Mammary epithelial cell (primary cell): ENCODE measurements at regions of chr5 and their contacts with region 1.

Region 1: GRCh38 chr5:76165711-76166374 is 82.7 kb downstream of the SV2C start:
- DNase-seq: no peak
- H3K4me3 ChIP-seq: no peak overlapping the region
- H3K27ac ChIP-seq: no peak overlapping the region
- H3K4me1 ChIP-seq: no peaks in the 10 kb centered on the region
- H3K27me3 ChIP-seq: no peaks in the 10 kb centered on the region
- CTCF ChIP-seq: no peak

Region 2: DNA sequence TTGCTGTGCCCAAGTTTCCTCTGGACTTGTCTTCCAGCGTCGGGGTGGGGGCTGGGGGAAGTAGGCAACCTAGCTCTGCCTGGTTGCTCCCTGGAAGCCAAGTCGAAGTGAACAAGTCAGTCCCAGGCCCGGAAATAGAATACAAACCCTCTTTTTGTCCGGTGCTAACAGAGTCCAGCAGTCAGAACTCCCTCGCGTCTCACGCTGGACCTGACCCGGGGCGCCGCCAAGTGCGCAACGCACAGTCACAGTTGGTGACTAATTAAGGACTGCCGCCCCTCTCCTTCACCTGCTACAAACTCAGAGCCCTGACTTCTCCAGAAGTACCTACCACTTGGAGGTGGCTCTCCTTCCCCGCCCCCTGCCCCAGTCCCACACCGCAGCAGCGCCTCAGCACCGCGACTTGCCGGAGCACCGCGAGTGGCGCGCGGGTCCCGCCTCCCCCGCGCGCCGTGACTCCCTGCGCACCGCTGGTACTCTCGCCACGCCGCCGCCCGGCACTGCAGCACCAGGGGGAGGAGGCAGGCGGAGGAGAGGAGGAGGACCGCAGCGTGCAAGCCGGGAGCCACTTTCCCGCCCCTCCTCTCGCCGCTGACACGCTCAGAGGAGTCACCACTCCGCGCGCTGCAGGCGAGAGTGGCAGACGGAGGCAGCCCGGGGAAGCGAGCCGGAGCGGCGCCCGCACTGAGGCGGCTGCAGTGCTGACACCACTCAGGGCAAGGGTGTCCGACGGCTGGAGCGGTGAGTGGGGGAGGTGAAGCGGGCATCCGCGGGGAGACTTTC is 82.9 kb before region 1 on chr5 and contains the start of gene SV2C:
- CTCF ChIA-PET with region 1: no interaction called
- dilution Hi-C with region 1: no loop called
- in situ Hi-C with region 1: no loop called
- intact Hi-C with region 1: no loop called
- DNase-seq: peak; percentile 21
- H3K4me3 ChIP-seq: no peak within 1 kb of the TSS
- H3K27ac ChIP-seq: no peak within 1 kb of the TSS
- H3K4me1 ChIP-seq: peaks cover 7% of the 10 kb centered on the region
- H3K27me3 ChIP-seq: peaks cover 56% of the 10 kb centered on the region
- CTCF ChIP-seq: no peak
- total RNA-seq, gene SV2C: under 0.01 to 0.26 TPM

Region 3: DNA sequence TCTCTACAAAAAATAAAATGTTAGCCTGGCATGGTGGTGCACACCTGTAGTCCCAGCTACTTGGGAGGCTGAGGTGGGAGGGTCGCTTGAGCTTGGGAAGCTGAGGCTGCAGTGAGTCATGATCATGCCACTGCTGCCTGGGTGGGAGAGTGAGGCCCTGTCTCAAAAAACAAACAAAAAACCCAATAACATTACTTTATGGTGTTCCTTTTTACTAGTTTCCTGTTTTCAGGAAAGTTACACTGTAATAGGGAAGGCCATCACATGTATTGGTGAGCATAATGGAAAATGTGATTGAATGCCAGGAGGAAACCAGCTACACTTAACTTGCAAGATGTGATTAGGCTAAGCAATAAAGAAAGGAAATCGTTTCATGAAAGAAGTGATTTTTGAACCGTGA is 40.0 kb before region 1 on chr5:
- CTCF ChIA-PET with region 1: no interaction called
- dilution Hi-C with region 1: loop called (anchors 5 kb)
- in situ Hi-C with region 1: no loop called
- intact Hi-C with region 1: no loop called
- DNase-seq: no peak
- H3K4me3 ChIP-seq: no peak overlapping the region
- H3K27ac ChIP-seq: no peak overlapping the region
- H3K4me1 ChIP-seq: no peaks in the 10 kb centered on the region
- H3K27me3 ChIP-seq: no peaks in the 10 kb centered on the region
- CTCF ChIP-seq: no peak

Region 4: GRCh38 chr5:76594107-76594506 is 428.3 kb after region 1 on chr5:
- CTCF ChIA-PET with region 1: no interaction called
- dilution Hi-C with region 1: no loop called
- in situ Hi-C with region 1: no loop called
- intact Hi-C with region 1: no loop called
- DNase-seq: no peak
- H3K4me3 ChIP-seq: no peak overlapping the region
- H3K27ac ChIP-seq: no peak overlapping the region
- H3K4me1 ChIP-seq: no peaks in the 10 kb centered on the region
- H3K27me3 ChIP-seq: no peaks in the 10 kb centered on the region
- CTCF ChIP-seq: no peak